Common myeloid progenitor, CD34-positive (primary cell): ENCODE measurements at regions of chr13 and their contacts with region 1.

Region 1: GRCh38 chr13:48126944-48127830 is 32.3 kb upstream of the MED4 start:
- DNase-seq: peak; percentile 81 to 87 (median 86)
- H3K4me3 ChIP-seq: no peak overlapping the region
- H3K27ac ChIP-seq: no peak overlapping the region
- H3K4me1 ChIP-seq: peaks cover 0 to 6% (median 5%) of the 10 kb centered on the region in 4 experiments
- H3K27me3 ChIP-seq: no peaks in the 10 kb centered on the region

Region 2: DNA sequence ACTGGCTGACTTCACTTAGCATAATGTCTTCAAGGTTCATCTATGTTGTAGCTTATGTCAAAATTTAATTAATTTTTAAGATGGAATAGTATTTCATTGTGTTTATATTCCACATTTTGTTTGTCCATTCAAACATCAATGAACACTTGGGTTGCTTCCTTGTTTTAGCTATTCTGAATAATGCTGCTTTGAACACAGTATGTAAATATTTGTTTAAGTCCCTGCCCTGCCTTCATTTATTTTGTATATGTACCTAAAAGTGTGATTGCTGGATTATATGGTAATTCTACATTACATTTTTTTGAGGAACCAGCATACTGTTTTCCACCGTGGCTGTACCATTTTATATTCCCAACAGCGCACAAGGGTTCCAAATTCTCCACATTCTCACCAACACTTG is 108.6 kb before region 1 on chr13:
- CTCF ChIA-PET with region 1: no interaction called
- POLR2A ChIA-PET with region 1: no interaction called
- DNase-seq: no peak
- H3K4me3 ChIP-seq: no peak overlapping the region
- H3K27ac ChIP-seq: no peak overlapping the region
- H3K4me1 ChIP-seq: no peaks in the 10 kb centered on the region
- H3K27me3 ChIP-seq: no peaks in the 10 kb centered on the region

Region 3: GRCh38 chr13:48148454-48148853 is 21.3 kb after region 1 on chr13:
- CTCF ChIA-PET with region 1: interaction called, 13 read pairs
- POLR2A ChIA-PET with region 1: no interaction called
- DNase-seq: peak in 2 of 3 donors; percentile 51 to 61
- H3K4me3 ChIP-seq: no peak overlapping the region
- H3K27ac ChIP-seq: no peak overlapping the region
- H3K4me1 ChIP-seq: peaks cover 7 to 59% (median 40%) of the 10 kb centered on the region in 4 experiments
- H3K27me3 ChIP-seq: no peaks in the 10 kb centered on the region

Region 4: GRCh38 chr13:48167866-48168265 is 40.7 kb after region 1 on chr13:
- CTCF ChIA-PET with region 1: interaction called, 11 read pairs
- POLR2A ChIA-PET with region 1: no interaction called
- DNase-seq: no peak
- H3K4me3 ChIP-seq: no peak overlapping the region
- H3K27ac ChIP-seq: no peak overlapping the region
- H3K4me1 ChIP-seq: peaks cover 0 to 4% (median under 1%) of the 10 kb centered on the region in 4 experiments
- H3K27me3 ChIP-seq: no peaks in the 10 kb centered on the region

Region 5: GRCh38 chr13:48233046-48233907 is 106.1 kb after region 1 on chr13 and contains the start of gene ITM2B:
- CTCF ChIA-PET with region 1: interaction called, 16 read pairs
- POLR2A ChIA-PET with region 1: no interaction called
- DNase-seq: peak; percentile 66 to 75 (median 75)
- H3K4me3 ChIP-seq: peak within 1 kb of the TSS; percentile 87 to 100 (median 99)
- H3K27ac ChIP-seq: peak within 1 kb of the TSS; percentile 92 to 97
- H3K4me1 ChIP-seq: peaks cover 24 to 45% (median 37%) of the 10 kb centered on the region in 4 experiments
- H3K27me3 ChIP-seq: no peaks in the 10 kb centered on the region

Region 6: GRCh38 chr13:48515732-48516131 is 388.5 kb after region 1 on chr13:
- CTCF ChIA-PET with region 1: no interaction called
- POLR2A ChIA-PET with region 1: no interaction called
- DNase-seq: no peak
- H3K4me3 ChIP-seq: no peak overlapping the region
- H3K27ac ChIP-seq: no peak overlapping the region
- H3K4me1 ChIP-seq: peaks cover 0 to 5% (median under 1%) of the 10 kb centered on the region in 4 experiments
- H3K27me3 ChIP-seq: peaks cover 0 to 5% (median 0%) of the 10 kb centered on the region in 5 experiments

Region 7: DNA sequence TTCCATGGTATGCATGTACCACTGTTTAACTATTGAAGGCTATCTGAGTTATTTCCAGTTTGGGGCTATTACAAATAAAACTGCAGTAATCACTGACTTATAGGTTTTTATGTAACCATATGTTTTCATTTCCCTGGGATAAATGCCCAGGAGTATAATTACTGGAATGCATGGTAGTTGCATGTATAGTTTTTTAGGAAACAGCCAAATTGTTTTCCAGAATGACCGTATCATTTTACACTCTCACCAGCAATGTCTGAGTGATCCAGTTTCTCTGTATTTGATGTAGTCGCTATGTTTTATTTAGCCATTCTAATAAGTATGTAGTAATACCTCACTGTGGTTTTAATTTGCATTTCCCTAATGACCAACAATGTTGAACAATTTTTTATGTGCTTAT is 568.6 kb after region 1 on chr13:
- CTCF ChIA-PET with region 1: no interaction called
- POLR2A ChIA-PET with region 1: no interaction called
- DNase-seq: no peak
- H3K4me3 ChIP-seq: no peak overlapping the region
- H3K27ac ChIP-seq: no peak overlapping the region
- H3K4me1 ChIP-seq: no peaks in the 10 kb centered on the region
- H3K27me3 ChIP-seq: no peaks in the 10 kb centered on the region